ENCODE measurements at regions of chr5 and their contacts with region 1.

Region 1: DNA sequence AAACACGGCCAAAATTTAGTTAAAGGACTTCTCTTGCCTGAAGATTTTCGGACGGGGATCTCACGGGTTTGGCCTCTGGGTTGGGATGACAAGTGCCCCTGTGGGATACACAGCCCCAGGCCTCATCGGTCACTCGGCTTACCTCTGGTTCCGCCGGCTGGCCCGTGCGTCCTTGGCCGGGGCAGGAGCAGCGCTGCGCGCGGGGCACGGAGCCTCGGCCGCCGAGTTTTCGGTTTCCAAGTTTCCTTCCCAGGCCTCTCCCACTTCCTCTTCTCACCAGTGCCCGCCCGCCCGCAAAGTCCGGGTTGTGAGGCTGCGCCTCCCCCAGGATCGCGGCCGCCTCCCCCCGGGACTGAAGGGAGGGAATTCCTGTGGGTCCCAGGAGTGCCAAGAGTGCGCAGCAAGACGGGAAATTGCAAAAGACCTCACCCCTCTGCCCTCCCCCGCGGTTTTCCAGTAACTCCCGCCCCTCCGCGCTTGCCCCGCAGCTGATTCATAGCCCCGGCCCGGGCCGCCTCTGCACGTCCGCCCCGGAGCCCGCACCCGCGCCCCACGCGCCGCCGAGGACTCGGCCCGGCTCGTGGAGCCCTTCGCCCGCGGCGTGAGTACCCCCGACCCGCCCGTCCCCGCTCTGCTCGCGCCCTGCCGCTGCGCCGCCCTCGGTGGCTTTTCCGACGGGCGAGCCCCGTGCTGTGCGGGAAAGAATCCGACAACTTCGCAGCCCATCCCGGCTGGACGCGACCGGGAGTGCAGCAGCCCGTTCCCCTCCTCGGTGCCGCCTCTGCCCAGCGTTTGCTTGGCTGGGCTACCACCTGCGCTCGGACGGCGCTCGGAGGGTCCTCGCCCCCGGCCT is at the start of gene OSMR:
- DNase-seq: peak; percentile 94
- H3K4me3 ChIP-seq: peak within 1 kb of the TSS; percentile 77 to 86 (median 85)
- H3K27ac ChIP-seq: peak within 1 kb of the TSS; percentile 83
- H3K4me1 ChIP-seq: peaks cover 7% of the 10 kb centered on the region
- H3K27me3 ChIP-seq: peaks cover 3 to 6% of the 10 kb centered on the region in 2 experiments
- CTCF ChIP-seq: no peak
- POLR2A ChIP-seq: peak; percentile 76
- total RNA-seq, gene OSMR: 12.8 and 19.7 TPM in 2 replicates

Region 2: GRCh38 chr5:38831909-38832308 is 13.8 kb before region 1 on chr5:
- CTCF ChIA-PET with region 1: interaction called, 12 read pairs
- POLR2A ChIA-PET with region 1: no interaction called
- dilution Hi-C with region 1: no loop called
- intact Hi-C with region 1: no loop called
- DNase-seq: peak; percentile 43
- H3K4me3 ChIP-seq: no peak overlapping the region
- H3K27ac ChIP-seq: no peak overlapping the region
- H3K4me1 ChIP-seq: peaks cover 8% of the 10 kb centered on the region
- H3K27me3 ChIP-seq: no peaks in the 10 kb centered on the region
- CTCF ChIP-seq: peak; percentile 41 to 71
- POLR2A ChIP-seq: no peak

Region 3: GRCh38 chr5:38871790-38872551 is 26.2 kb after region 1 on chr5:
- CTCF ChIA-PET with region 1: interaction called, 13 read pairs
- POLR2A ChIA-PET with region 1: no interaction called
- dilution Hi-C with region 1: no loop called
- intact Hi-C with region 1: loop called (anchors 1 kb)
- DNase-seq: peak; percentile 87
- H3K4me3 ChIP-seq: no peak overlapping the region
- H3K27ac ChIP-seq: peak overlapping the region; percentile 43
- H3K4me1 ChIP-seq: peaks cover 13% of the 10 kb centered on the region
- H3K27me3 ChIP-seq: peaks cover 0 to 4% of the 10 kb centered on the region in 2 experiments
- CTCF ChIP-seq: no peak
- POLR2A ChIP-seq: no peak

Region 4: GRCh38 chr5:38979535-38979934 is 133.8 kb after region 1 on chr5:
- CTCF ChIA-PET with region 1: no interaction called
- POLR2A ChIA-PET with region 1: no interaction called
- dilution Hi-C with region 1: no loop called
- intact Hi-C with region 1: no loop called
- DNase-seq: no peak
- H3K4me3 ChIP-seq: no peak overlapping the region
- H3K27ac ChIP-seq: no peak overlapping the region
- H3K4me1 ChIP-seq: no peaks in the 10 kb centered on the region
- H3K27me3 ChIP-seq: no peaks in the 10 kb centered on the region
- CTCF ChIP-seq: no peak
- POLR2A ChIP-seq: no peak